ENCODE measurements at regions of chr1 and their contacts with region 1.

Region 1: DNA sequence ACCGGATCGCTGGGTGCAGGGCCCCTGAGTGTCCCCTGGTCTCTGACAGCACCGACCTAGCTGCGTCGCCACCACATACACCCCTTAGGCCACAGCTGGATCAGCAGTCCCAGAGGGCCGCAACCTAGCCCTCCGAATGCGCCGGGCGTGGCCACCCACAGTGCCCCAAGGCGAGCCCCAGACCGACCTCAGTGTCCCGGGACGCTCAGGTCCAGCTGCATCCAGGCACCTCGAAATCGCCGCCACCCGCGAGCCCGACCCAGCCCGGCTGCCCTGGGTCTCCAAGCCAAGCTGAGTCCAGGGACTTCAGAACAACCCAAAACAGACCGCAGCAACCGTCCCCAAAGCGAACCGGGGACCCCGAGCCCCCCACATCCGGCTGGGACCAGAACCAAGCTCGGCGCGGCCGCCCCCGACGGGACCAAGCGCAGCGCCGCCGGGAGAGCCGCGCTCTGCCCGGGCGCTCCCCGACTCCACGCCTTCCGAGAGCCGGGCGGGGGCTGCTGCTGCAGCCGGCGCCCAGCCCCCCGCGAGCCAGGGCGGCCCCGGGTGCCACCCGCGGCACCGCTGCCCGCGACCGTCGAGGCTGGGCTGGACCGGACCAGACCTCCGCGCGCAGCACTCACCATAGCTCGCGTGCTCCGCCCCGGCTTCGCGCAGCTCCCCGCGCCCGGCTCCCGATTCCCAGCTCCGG is 54.6 kb upstream of the ECE1 start:
- DNase-seq: no peak
- H3K4me3 Mint-ChIP-seq: peak overlapping the region; percentile 97
- H3K27ac Mint-ChIP-seq: peak overlapping the region; percentile 76
- H3K4me1 Mint-ChIP-seq: peaks cover 37% of the 10 kb centered on the region
- H3K27me3 Mint-ChIP-seq: no peaks in the 10 kb centered on the region

Region 2: DNA sequence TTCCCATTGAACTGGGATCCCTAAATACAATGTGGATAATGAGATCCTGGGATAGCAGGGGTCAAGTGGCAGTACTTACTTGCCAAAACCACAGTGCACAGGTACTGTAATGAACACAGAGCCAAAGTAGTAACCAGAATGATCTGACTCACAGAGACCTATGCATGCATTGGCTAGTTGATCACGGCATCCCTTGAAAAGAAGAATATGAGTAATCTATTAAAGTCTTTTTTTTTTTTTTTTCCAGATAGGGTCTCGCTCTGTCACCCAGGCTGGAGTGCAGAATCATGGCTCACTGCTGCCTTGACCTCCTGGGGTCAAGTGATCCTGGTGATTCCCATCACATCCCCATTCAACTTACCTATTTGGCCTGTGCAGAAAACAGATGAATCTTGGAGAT is 138.8 kb before region 1 on chr1:
- intact Hi-C with region 1: no loop called
- DNase-seq: no peak
- H3K4me3 Mint-ChIP-seq: no peak overlapping the region
- H3K27ac Mint-ChIP-seq: no peak overlapping the region
- H3K4me1 Mint-ChIP-seq: peaks cover 8% of the 10 kb centered on the region
- H3K27me3 Mint-ChIP-seq: peaks cover 2% of the 10 kb centered on the region

Region 3: GRCh38 chr1:21255278-21255942 is 89.5 kb before region 1 on chr1:
- intact Hi-C with region 1: loop called (anchors 1 kb)
- DNase-seq: peak; percentile 57
- H3K4me3 Mint-ChIP-seq: no peak overlapping the region
- H3K27ac Mint-ChIP-seq: peak overlapping the region; percentile 75
- H3K4me1 Mint-ChIP-seq: peaks cover 43% of the 10 kb centered on the region
- H3K27me3 Mint-ChIP-seq: no peaks in the 10 kb centered on the region

Region 4: GRCh38 chr1:21324368-21325141 is 20.3 kb before region 1 on chr1:
- intact Hi-C with region 1: loop called (anchors 1 kb)
- DNase-seq: peak; percentile 40
- H3K4me3 Mint-ChIP-seq: peak overlapping the region; percentile 71
- H3K27ac Mint-ChIP-seq: peak overlapping the region; percentile 95
- H3K4me1 Mint-ChIP-seq: peaks cover 68% of the 10 kb centered on the region
- H3K27me3 Mint-ChIP-seq: peaks cover 2% of the 10 kb centered on the region

Region 5: GRCh38 chr1:21334214-21335087 is 10.4 kb before region 1 on chr1:
- intact Hi-C with region 1: loop called (anchors 1 kb)
- DNase-seq: peak; percentile 80
- H3K4me3 Mint-ChIP-seq: peak overlapping the region; percentile 84
- H3K27ac Mint-ChIP-seq: peak overlapping the region; percentile 95
- H3K4me1 Mint-ChIP-seq: peaks cover 85% of the 10 kb centered on the region
- H3K27me3 Mint-ChIP-seq: no peaks in the 10 kb centered on the region

Measured in activated T-helper 1 cell treated with anti-CD3 and anti-CD28 coated beads, Interleukin-12 subunit alpha, Interleukin-12 subunit beta, Interleukin-2, Interleukin-4 antibody, amounts not matched to agents 30 ng/mL and 10 ng/mL and 1 ng/mL, durations not matched to agents 14 hours and 24 hours and 36 hours (primary cell).